Activated CD4-positive, alpha-beta T cell treated with anti-CD3 and anti-CD28 coated beads for 36 hours (primary cell): ENCODE measurements at regions of chr7 and their contacts with region 1.

Region 1: DNA sequence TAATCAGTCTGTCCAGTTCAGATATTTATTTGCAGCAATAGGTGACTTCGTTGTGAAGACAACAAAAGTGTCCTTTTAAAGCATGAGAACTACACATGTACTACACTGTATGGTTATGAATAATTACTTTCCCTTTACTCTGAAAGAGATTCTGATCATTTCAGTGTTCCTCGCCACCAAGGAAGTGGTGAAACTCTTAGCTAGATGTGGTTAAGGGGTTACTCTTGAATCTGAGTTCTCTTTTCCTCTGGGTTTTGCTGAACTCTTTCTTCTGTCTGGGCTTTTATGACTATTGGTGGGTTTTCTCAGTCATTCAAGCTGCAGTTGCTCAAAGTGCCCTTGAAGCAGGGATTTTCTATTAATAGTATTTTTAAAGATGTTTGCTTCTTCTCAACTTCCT is 127.9 kb upstream of the SEM1 start:
- DNase-seq: peak; percentile 48
- ATAC-seq: peak; percentile 94
- H3K4me3 Mint-ChIP-seq: peak overlapping the region; percentile 4
- H3K27ac Mint-ChIP-seq: peak overlapping the region; percentile 61
- H3K4me1 Mint-ChIP-seq: peaks cover 34% of the 10 kb centered on the region
- H3K27me3 Mint-ChIP-seq: peaks cover 54% of the 10 kb centered on the region

Region 2: DNA sequence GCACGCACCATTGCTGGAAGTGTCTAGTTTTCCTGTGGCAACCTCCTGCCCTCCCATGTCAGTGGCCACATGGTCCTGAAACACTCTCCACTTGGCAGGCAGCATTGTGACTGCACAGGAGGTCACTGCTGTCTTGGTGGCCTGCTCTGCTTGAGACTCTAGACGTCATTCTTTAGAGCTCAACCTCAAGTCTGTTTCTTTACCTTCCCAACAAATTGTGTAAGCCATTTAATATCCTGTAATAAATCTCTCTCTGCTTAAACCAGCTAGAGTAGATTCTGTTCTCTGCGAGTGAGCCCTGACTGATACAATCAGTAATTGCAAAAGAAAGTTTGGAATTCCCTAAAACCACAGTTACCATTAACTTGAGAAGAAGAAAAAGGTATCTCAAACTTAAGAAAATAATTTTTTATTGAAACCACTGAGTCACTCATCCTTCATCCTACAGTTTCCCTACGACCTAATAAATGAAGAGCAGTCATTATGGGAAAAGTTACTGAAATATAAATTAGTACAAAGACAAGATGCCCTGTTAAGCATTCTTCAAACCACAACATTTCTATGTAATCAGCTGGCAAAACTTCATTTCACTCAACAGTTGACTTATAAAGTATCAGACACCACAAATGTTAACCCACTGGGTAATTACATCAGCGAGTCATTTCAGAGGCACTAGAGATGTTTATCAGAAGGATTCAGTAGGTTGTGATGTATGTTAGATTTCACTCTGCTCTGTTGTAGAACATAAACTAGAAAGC is 533.7 kb before region 1 on chr7:
- CTCF ChIA-PET with region 1: no interaction called
- POLR2A ChIA-PET with region 1: no interaction called
- intact Hi-C with region 1: loop called (anchors 5 kb)
- DNase-seq: no peak
- ATAC-seq: peak; percentile 91
- H3K4me3 Mint-ChIP-seq: no peak overlapping the region
- H3K27ac Mint-ChIP-seq: peak overlapping the region; percentile 80
- H3K4me1 Mint-ChIP-seq: peaks cover 58% of the 10 kb centered on the region
- H3K27me3 Mint-ChIP-seq: no peaks in the 10 kb centered on the region

Region 3: GRCh38 chr7:96495751-96496216 is 341.8 kb before region 1 on chr7:
- CTCF ChIA-PET with region 1: no interaction called
- POLR2A ChIA-PET with region 1: no interaction called
- intact Hi-C with region 1: loop called (anchors 5 kb)
- DNase-seq: peak; percentile 56
- ATAC-seq: peak; percentile 92
- H3K4me3 Mint-ChIP-seq: peak overlapping the region; percentile 27
- H3K27ac Mint-ChIP-seq: peak overlapping the region; percentile 74
- H3K4me1 Mint-ChIP-seq: peaks cover 12% of the 10 kb centered on the region
- H3K27me3 Mint-ChIP-seq: no peaks in the 10 kb centered on the region

Region 4: GRCh38 chr7:96823274-96823673 is 14.3 kb before region 1 on chr7:
- CTCF ChIA-PET with region 1: interaction called, 4 read pairs
- POLR2A ChIA-PET with region 1: no interaction called
- intact Hi-C with region 1: loop called (anchors 1 kb)
- DNase-seq: no peak
- ATAC-seq: peak; percentile 81
- H3K4me3 Mint-ChIP-seq: no peak overlapping the region
- H3K27ac Mint-ChIP-seq: no peak overlapping the region
- H3K4me1 Mint-ChIP-seq: peaks cover 2% of the 10 kb centered on the region
- H3K27me3 Mint-ChIP-seq: peaks cover 35% of the 10 kb centered on the region

Region 5: GRCh38 chr7:97006036-97006815 is 168.6 kb after region 1 on chr7:
- CTCF ChIA-PET with region 1: no interaction called
- POLR2A ChIA-PET with region 1: no interaction called
- intact Hi-C with region 1: loop called in 1 of 2 experiments (anchors 2 kb)
- DNase-seq: peak; percentile 71
- ATAC-seq: peak; percentile 70
- H3K4me3 Mint-ChIP-seq: peak overlapping the region; percentile 65
- H3K27ac Mint-ChIP-seq: no peak overlapping the region
- H3K4me1 Mint-ChIP-seq: peaks cover 14% of the 10 kb centered on the region
- H3K27me3 Mint-ChIP-seq: peaks cover 75% of the 10 kb centered on the region

Region 6: DNA sequence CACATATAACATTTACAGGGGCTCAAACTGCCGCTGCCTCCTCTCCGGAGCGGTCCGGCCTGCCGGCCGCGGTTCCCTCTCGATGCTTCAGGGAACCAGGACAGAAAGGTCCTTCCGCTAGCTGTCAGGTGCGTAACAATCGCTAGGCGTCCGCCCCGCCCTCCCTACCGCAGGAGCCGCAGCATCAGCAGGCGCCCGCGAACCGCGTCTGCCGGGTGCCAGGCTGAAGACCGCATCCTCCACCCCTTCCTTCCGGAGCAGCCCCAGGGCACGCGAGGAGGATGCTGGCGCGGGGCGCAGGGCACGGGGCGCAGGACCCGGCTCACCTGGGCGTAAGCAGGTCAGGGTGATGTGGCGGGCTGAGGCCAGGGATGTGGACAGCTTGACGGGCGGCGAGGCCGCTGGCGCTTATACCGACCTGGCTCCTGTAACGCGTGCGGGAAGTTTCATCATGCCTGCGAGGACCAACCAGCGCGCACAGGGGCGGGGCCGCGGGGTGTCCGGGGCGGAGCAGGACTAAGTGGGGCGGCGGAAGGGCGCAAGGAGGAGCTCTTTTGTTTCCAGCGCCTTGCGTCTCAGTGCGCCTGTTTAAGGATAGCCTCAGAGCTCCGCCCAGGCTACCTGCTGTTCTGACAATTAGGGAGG is 1034.6 kb after region 1 on chr7 and contains the start of gene ASNS:
- CTCF ChIA-PET with region 1: no interaction called
- POLR2A ChIA-PET with region 1: no interaction called
- intact Hi-C with region 1: loop called in 1 of 2 experiments (anchors 10 kb)
- DNase-seq: peak; percentile 96
- ATAC-seq: peak; percentile 96
- H3K4me3 Mint-ChIP-seq: peak within 1 kb of the TSS; percentile 92
- H3K27ac Mint-ChIP-seq: peak within 1 kb of the TSS; percentile 82
- H3K4me1 Mint-ChIP-seq: peaks cover 20% of the 10 kb centered on the region
- H3K27me3 Mint-ChIP-seq: no peaks in the 10 kb centered on the region
- total RNA-seq, gene ASNS: 228 to 247 TPM